PC-9 (cell line): ENCODE measurements at regions of chr5 and their contacts with region 1.

Region 1: DNA sequence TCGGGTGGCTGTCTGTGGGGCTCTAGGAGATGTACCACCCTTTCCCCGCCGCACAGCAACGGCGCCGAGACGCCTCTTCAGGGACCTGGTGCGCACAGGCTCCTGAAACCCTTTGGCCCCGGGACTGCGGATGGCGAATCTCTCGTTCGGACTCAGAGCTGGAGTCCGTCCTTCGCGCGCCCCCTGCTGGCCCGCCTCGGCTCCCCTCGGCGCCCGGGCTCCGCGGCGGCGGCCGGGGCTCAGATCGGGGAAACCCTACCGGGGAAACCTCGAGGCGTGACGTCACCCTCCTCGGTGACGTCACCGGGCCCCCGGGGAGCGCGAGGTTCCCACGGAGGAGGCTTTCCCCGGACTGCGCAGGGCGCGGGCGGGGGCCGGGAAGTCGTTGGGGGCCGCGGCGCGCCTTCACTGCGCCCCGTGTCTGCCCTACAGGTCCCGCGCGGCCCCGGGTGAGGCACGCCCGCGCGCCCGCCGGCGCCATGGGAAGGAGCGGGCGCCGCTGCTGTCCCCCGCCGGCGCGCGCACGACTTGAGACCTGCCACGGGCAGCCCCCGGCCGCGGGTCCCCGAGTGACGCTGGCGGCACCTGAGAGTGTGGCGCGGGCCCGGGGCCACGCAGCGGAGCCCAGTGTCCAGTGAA is 7.9 kb downstream of the PRR7 start:
- DNase-seq: peak; percentile 71 to 96
- H3K4me3 ChIP-seq: peak overlapping the region; percentile 77
- H3K27ac ChIP-seq: 0 out of 2 replicates have a peak overlapping the region, but pooled peaks have one; percentile 26
- H3K4me1 ChIP-seq: 0 out of 2 replicates have a peak, but pooled peaks cover 5% of the 10 kb centered on the region
- H3K27me3 ChIP-seq: no peaks in the 10 kb centered on the region
- CTCF ChIP-seq: peak; percentile 82

Region 2: GRCh38 chr5:177303121-177303924 is 151.2 kb before region 1 on chr5 and contains the starts of genes PRELID1 and RAB24:
- CTCF ChIA-PET with region 1: no interaction called
- POLR2A ChIA-PET with region 1: no interaction called
- intact Hi-C with region 1: no loop called
- DNase-seq: peak; percentile 61 to 91
- H3K4me3 ChIP-seq: peak within 1 kb of the TSS; percentile 100
- H3K27ac ChIP-seq: peak within 1 kb of the TSS; percentile 39
- H3K4me1 ChIP-seq: peaks cover 40% of the 10 kb centered on the region
- H3K27me3 ChIP-seq: no peaks in the 10 kb centered on the region
- CTCF ChIP-seq: no peak; the same call in 1 of the 2 replicates
- total RNA-seq, gene PRELID1: 189 and 209 TPM in 2 replicates
- total RNA-seq, gene RAB24: 16.9 and 25.2 TPM in 2 replicates

Region 3: DNA sequence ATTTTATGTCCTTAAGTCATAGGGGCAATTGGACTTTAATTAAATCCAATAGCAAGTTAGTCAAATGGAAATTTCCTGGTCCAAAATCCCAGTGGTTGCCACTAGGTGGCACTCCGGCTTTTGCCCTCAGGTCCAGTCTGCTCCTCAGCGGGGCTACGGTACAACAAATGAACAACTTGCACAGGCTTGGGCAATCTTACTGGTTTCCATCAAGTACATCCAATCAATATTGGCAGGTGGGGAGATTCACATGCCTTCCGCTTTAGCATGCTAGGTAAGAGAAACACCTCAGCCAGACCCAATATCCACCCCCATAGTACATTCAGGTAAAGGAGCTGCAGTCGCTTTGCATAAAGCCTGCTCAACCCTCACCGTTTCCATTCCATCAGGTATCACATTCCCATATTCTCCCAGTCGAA is 136.5 kb before region 1 on chr5:
- CTCF ChIA-PET with region 1: interaction called, 5 read pairs
- POLR2A ChIA-PET with region 1: no interaction called
- intact Hi-C with region 1: loop called (anchors 1 kb)
- DNase-seq: peak; percentile 67 to 72
- H3K4me3 ChIP-seq: no peak overlapping the region
- H3K27ac ChIP-seq: no peak overlapping the region
- H3K4me1 ChIP-seq: peaks cover 4% of the 10 kb centered on the region; the same call in 1 of the 2 replicates
- H3K27me3 ChIP-seq: no peaks in the 10 kb centered on the region
- CTCF ChIP-seq: peak; percentile 92

Region 4: GRCh38 chr5:177351385-177352329 is 102.9 kb before region 1 on chr5 and contains the start of gene LMAN2:
- CTCF ChIA-PET with region 1: no interaction called
- POLR2A ChIA-PET with region 1: no interaction called
- intact Hi-C with region 1: no loop called
- DNase-seq: peak; percentile 88 to 92
- H3K4me3 ChIP-seq: peak within 1 kb of the TSS; percentile 78
- H3K27ac ChIP-seq: peak within 1 kb of the TSS; percentile 85
- H3K4me1 ChIP-seq: peaks cover 20% of the 10 kb centered on the region
- H3K27me3 ChIP-seq: no peaks in the 10 kb centered on the region
- CTCF ChIP-seq: no peak
- total RNA-seq, gene LMAN2: 129 and 153 TPM in 2 replicates

Region 5: GRCh38 chr5:177382423-177383029 is 72.0 kb before region 1 on chr5:
- CTCF ChIA-PET with region 1: no interaction called
- POLR2A ChIA-PET with region 1: no interaction called
- intact Hi-C with region 1: no loop called
- DNase-seq: no peak
- H3K4me3 ChIP-seq: no peak overlapping the region
- H3K27ac ChIP-seq: no peak overlapping the region
- H3K4me1 ChIP-seq: peaks cover 11% of the 10 kb centered on the region; the same call in 1 of the 2 replicates
- H3K27me3 ChIP-seq: no peaks in the 10 kb centered on the region
- CTCF ChIP-seq: no peak

Region 6: DNA sequence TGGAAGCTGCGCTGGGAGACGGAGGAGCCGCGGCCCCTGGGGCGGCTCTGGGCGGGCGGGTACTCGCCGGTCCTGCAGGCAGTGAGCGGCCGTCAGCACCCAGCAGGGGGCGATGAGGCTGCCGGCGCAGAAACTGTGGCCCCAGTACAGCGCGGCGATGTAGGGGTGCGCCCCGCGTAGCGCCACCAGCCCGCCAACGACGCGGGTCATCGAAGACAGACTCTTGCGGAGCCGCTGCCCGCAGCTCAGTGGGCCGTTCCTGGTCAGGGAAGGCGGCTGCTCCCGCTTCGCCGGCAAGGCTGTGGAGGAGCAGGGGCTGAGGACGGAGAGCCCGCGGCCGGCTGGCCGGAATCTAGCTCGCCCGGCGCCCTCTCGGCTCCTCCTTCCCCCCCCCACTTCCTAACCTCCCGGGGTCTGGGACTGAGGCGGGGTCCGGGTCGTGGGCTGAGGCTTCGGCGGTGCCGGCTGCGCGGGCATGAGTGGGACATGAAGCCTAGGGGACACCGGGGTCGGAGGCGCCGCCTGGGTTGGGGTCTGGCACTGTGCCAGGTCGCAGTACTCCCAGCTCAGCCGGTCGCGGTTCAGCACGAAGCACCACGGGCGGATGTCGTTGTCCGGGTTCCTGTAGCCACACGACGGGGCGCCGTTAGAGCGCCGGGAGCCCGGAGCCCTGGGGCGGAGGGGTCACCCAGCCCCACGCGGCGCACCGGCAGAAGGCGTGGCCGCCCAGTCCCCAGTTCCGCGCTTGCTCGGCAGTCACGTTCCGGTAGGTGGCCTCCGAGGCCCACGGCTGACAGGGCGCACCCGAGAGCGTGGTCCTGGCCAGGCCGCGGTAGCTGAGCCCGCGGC is 50.5 kb before region 1 on chr5:
- CTCF ChIA-PET with region 1: interaction called, 6 read pairs
- POLR2A ChIA-PET with region 1: interaction called, 3 read pairs
- intact Hi-C with region 1: loop called (anchors 1 kb)
- DNase-seq: peak; percentile 51 to 86
- H3K4me3 ChIP-seq: peak overlapping the region; percentile 78
- H3K27ac ChIP-seq: no peak overlapping the region
- H3K4me1 ChIP-seq: peaks cover 3% of the 10 kb centered on the region; the same call in 1 of the 2 replicates
- H3K27me3 ChIP-seq: no peaks in the 10 kb centered on the region
- CTCF ChIP-seq: peak; percentile 73

Region 7: DNA sequence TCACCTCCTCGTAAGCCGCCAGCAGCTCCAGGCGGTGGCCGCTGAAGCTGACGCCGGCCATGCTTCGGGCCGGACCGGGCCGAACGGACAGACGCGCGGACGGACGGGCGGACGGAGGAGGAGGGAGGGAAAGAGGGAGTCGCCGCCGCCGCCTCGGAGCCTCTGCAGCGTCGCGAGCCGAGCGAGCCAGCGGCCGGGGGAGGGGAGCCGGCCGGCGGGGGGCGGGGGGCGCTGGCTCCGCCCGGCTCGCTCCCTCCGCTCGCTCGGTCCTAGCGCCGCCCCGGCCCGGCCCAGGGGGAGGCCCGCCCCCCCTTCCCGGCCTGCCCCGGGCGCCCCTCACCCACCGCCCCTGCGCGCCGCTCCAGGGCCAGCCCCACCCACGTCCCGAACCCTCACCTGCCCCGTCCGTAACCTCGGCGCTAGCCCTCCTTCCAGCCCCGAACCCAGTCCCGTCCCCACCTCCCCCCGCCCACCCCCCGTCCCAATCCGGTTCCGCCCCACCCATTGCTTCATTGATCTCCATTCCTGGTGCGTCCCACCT is 19.0 kb after region 1 on chr5 and contains the start of gene DBN1:
- CTCF ChIA-PET with region 1: interaction called, 4 read pairs
- POLR2A ChIA-PET with region 1: interaction called, 5 read pairs
- intact Hi-C with region 1: loop called (anchors 2 kb)
- DNase-seq: no peak
- H3K4me3 ChIP-seq: peak within 1 kb of the TSS; percentile 79
- H3K27ac ChIP-seq: no peak within 1 kb of the TSS
- H3K4me1 ChIP-seq: peaks cover 22% of the 10 kb centered on the region
- H3K27me3 ChIP-seq: no peaks in the 10 kb centered on the region
- CTCF ChIP-seq: no peak
- total RNA-seq, gene DBN1: 144 and 181 TPM in 2 replicates